ENCODE measurements at regions of chr15 and their contacts with region 1.

Region 1: DNA sequence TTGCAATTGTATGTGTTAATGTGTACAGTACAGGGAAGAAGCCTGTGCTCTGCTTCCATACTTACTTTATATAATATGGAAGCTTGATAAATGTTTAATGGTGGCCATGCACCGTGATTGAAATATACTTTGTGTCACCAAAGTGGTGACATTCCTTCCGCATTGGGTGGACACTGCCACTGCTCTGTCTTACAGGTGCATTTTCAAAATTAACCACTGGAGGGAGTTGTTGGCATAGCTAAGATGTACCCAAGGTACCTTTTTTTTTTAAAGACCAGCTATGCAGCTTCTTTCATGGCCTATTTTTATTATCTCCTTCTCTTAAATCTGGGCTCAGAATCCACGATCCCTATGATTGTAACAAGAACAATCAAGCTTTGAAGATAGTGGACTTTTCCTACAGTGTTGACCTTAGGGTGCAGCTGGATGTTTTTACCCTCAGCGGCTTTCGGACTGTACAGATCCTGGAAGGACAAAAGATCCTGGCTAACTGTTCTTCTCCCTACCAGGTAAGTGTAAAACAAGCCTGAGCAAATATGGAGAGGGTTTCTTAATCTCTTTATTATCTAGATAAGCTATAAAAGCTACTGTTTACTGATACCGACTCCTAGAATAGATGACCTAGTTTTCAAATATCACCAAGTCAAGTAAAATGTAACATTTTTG is 21.6 kb upstream of the PAK6 start:
- DNase-seq: peak; percentile 62
- ATAC-seq: peak; percentile 86
- H3K4me3 Mint-ChIP-seq: no peak overlapping the region
- H3K27ac Mint-ChIP-seq: no peak overlapping the region
- H3K4me1 Mint-ChIP-seq: no peaks in the 10 kb centered on the region
- H3K27me3 Mint-ChIP-seq: no peaks in the 10 kb centered on the region

Region 2: GRCh38 chr15:40038638-40039543 is 178.4 kb before region 1 on chr15 and contains the start of gene SRP14:
- CTCF ChIA-PET with region 1: interaction called, 12 read pairs
- POLR2A ChIA-PET with region 1: interaction called, 3 read pairs
- DNase-seq: peak; percentile 95
- ATAC-seq: peak; percentile 95
- H3K4me3 Mint-ChIP-seq: peak within 1 kb of the TSS; percentile 97
- H3K27ac Mint-ChIP-seq: peak within 1 kb of the TSS; percentile 95
- H3K4me1 Mint-ChIP-seq: peaks cover 50% of the 10 kb centered on the region
- H3K27me3 Mint-ChIP-seq: no peaks in the 10 kb centered on the region
- total RNA-seq, gene SRP14: 178 to 182 TPM

Region 3: GRCh38 chr15:40160689-40161688 is 56.3 kb before region 1 on chr15 and contains the start of gene BUB1B:
- CTCF ChIA-PET with region 1: interaction called, 10 read pairs
- POLR2A ChIA-PET with region 1: no interaction called
- DNase-seq: peak; percentile 97
- ATAC-seq: peak; percentile 95
- H3K4me3 Mint-ChIP-seq: no peak within 1 kb of the TSS
- H3K27ac Mint-ChIP-seq: no peak within 1 kb of the TSS
- H3K4me1 Mint-ChIP-seq: peaks cover 10% of the 10 kb centered on the region
- H3K27me3 Mint-ChIP-seq: no peaks in the 10 kb centered on the region
- total RNA-seq, gene BUB1B: 91.9 to 94.9 TPM

Region 4: DNA sequence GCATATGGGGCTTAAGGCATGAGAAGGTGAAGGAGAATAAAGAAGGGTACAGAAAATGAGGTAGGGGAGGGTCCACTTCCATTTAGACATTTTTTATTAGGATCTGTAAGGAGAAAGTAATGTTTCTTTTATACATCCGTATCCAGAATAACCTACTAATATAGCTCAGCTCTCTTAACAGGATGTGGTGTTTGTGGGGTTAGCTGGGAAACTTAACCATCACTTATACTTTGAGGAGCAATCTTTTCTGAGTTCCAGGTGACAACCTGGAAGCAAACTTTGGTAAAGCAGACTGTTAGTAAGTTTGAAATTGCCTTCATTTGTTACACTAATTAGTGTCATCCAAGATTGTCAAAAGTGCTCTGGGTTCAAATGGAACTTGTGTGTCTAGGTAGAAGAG is 19.9 kb before region 1 on chr15:
- CTCF ChIA-PET with region 1: interaction called, 25 read pairs
- POLR2A ChIA-PET with region 1: no interaction called
- DNase-seq: peak; percentile 32
- ATAC-seq: peak; percentile 53
- H3K4me3 Mint-ChIP-seq: no peak overlapping the region
- H3K27ac Mint-ChIP-seq: peak overlapping the region; percentile 72
- H3K4me1 Mint-ChIP-seq: peaks cover 35% of the 10 kb centered on the region
- H3K27me3 Mint-ChIP-seq: no peaks in the 10 kb centered on the region

Region 5: GRCh38 chr15:40238532-40239403 is 21.5 kb after region 1 on chr15 and contains the start of gene PAK6:
- CTCF ChIA-PET with region 1: interaction called, 16 read pairs
- POLR2A ChIA-PET with region 1: interaction called, 3 read pairs
- DNase-seq: peak; percentile 44
- ATAC-seq: peak; percentile 73
- H3K4me3 Mint-ChIP-seq: no peak within 1 kb of the TSS
- H3K27ac Mint-ChIP-seq: no peak within 1 kb of the TSS
- H3K4me1 Mint-ChIP-seq: peaks cover 24% of the 10 kb centered on the region
- H3K27me3 Mint-ChIP-seq: peaks cover 17% of the 10 kb centered on the region
- total RNA-seq, gene PAK6: 1.2 to 1.4 TPM

Region 6: GRCh38 chr15:40307421-40308211 is 90.3 kb after region 1 on chr15 and contains the start of gene PLCB2:
- CTCF ChIA-PET with region 1: interaction called, 35 read pairs
- POLR2A ChIA-PET with region 1: no interaction called
- DNase-seq: peak; percentile 82
- ATAC-seq: peak; percentile 81
- H3K4me3 Mint-ChIP-seq: peak within 1 kb of the TSS; percentile 99
- H3K27ac Mint-ChIP-seq: peak within 1 kb of the TSS; percentile 98
- H3K4me1 Mint-ChIP-seq: peaks cover 38% of the 10 kb centered on the region
- H3K27me3 Mint-ChIP-seq: peaks cover 13% of the 10 kb centered on the region
- total RNA-seq, gene PLCB2: 133 to 160 TPM

Region 7: DNA sequence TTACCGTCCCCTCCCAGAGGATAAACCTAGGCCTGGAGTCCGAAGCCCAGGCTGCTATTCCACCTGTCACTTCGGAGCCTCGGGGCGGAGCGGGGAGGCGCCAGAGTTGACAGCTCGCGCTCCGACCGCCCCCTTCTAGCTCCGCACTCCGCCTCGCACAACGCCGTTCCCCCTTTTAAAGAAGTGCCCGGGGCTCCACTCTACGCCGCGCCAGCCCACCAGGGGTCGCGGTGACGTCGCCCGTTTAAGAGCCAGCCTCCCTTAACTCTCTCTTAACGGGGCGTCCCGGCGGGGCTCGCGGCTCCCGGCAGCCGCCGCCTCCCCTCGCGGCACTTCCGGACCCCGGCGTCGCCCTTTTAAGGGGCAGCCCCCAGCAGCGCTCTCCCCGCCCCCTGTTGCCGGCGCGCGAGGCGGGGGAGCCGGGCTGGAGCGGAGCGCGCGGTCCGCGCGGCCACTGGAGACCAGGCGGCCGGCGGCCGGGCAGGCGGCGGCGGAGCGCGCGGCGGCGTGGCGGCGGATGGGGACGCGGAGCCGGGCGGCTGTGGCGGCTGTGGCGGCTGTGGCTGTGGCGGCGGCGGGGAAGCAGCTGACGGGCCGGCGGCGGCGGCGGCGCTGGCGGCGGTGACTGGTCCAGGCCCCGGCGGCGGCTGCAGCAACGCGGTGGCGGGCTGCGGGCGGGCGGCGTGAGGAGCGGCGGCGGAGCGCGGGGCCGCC is 106.1 kb after region 1 on chr15 and contains the start of gene INAFM2:
- CTCF ChIA-PET with region 1: no interaction called
- POLR2A ChIA-PET with region 1: no interaction called
- DNase-seq: peak; percentile 95
- ATAC-seq: peak; percentile 91
- H3K4me3 Mint-ChIP-seq: peak within 1 kb of the TSS; percentile 73
- H3K27ac Mint-ChIP-seq: no peak within 1 kb of the TSS
- H3K4me1 Mint-ChIP-seq: peaks cover 31% of the 10 kb centered on the region
- H3K27me3 Mint-ChIP-seq: peaks cover 8% of the 10 kb centered on the region
- total RNA-seq, gene INAFM2: 8.7 to 9.4 TPM

Measured in activated CD8-positive, alpha-beta T cell treated with anti-CD3 and anti-CD28 coated beads, Interleukin-2, amount 10 ng/mL, durations not matched to agents 7 days and 5 days (primary cell).